SK-N-SH (cell line): ENCODE measurements at regions of chr3 and their contacts with region 1.

Region 1: GRCh38 chr3:152574461-152575079 is 260.4 kb upstream of the P2RY1 start:
- DNase-seq: peak; percentile 33
- H3K4me3 ChIP-seq: no peak overlapping the region
- H3K27ac ChIP-seq: no peak overlapping the region
- H3K4me1 ChIP-seq: no peaks in the 10 kb centered on the region
- H3K27me3 ChIP-seq: peaks cover 4% of the 10 kb centered on the region; the same call in 1 of the 2 replicates
- CTCF ChIP-seq: peak; percentile 67
- EP300 ChIP-seq: no peak
- RAD21 ChIP-seq: peak; percentile 78

Region 2: GRCh38 chr3:152471814-152472671 is 102.5 kb before region 1 on chr3:
- CTCF ChIA-PET with region 1: interaction called, 12 read pairs
- POLR2A ChIA-PET with region 1: no interaction called
- DNase-seq: peak; percentile 49
- H3K4me3 ChIP-seq: peak overlapping the region in 1 of 2 experiments; percentile 14; a peak in 2 of 4 replicates
- H3K27ac ChIP-seq: no peak overlapping the region; a peak in 1 of 4 replicates
- H3K4me1 ChIP-seq: peaks cover 0 to 3% of the 10 kb centered on the region in 2 experiments; a peak in 1 of 4 replicates
- H3K27me3 ChIP-seq: no peaks in the 10 kb centered on the region
- CTCF ChIP-seq: peak; percentile 80
- EP300 ChIP-seq: no peak
- RAD21 ChIP-seq: peak; percentile 71

Region 3: DNA sequence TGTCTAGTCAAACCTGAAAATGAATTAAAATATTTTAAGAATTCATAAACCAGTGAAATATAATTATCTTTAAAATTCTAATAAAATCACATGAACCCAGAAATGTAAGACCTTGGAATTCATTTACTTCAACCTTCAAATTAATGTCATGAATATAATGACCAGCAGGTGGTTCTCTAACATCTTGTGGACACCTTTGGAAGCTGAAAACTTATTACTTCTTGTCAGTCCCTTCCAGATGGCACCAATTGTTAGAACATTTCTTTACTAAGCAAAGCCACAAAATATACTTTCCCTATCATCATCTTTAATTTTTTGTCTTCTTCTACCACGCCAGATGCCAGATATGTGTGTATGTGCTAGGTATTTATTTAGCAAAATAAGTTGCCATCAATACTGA is 65.9 kb before region 1 on chr3:
- CTCF ChIA-PET with region 1: interaction called, 12 read pairs
- POLR2A ChIA-PET with region 1: no interaction called
- DNase-seq: no peak
- H3K4me3 ChIP-seq: no peak overlapping the region
- H3K27ac ChIP-seq: no peak overlapping the region
- H3K4me1 ChIP-seq: no peaks in the 10 kb centered on the region
- H3K27me3 ChIP-seq: no peaks in the 10 kb centered on the region
- CTCF ChIP-seq: no peak; the same call in 1 of the 2 replicates
- EP300 ChIP-seq: no peak
- RAD21 ChIP-seq: peak; percentile 52